MCF 10A (cell line): ENCODE measurements at regions of chr21 and their contacts with region 1.

Region 1: GRCh38 chr21:44892536-44893277 is 19.2 kb upstream of the PTTG1IP start:
- DNase-seq: peak; percentile 70
- H3K4me3 Mint-ChIP-seq: no peak overlapping the region
- H3K27ac Mint-ChIP-seq: no peak overlapping the region
- H3K4me1 Mint-ChIP-seq: peaks cover 6% of the 10 kb centered on the region
- H3K27me3 Mint-ChIP-seq: no peaks in the 10 kb centered on the region
- CTCF ChIP-seq: peak; percentile 84

Region 2: GRCh38 chr21:44911389-44912157 is 18.9 kb after region 1 on chr21:
- CTCF ChIA-PET with region 1: interaction called, 13 read pairs
- POLR2A ChIA-PET with region 1: interaction called, 6 read pairs
- intact Hi-C with region 1: loop called (anchors 1 kb)
- DNase-seq: peak; percentile 93
- H3K4me3 Mint-ChIP-seq: peak overlapping the region; percentile 42
- H3K27ac Mint-ChIP-seq: peak overlapping the region; percentile 1
- H3K4me1 Mint-ChIP-seq: peaks cover 37% of the 10 kb centered on the region
- H3K27me3 Mint-ChIP-seq: no peaks in the 10 kb centered on the region
- CTCF ChIP-seq: peak; percentile 87